Dendritic cell treated with granulocyte-macrophage colony-stimulating factor and Interleukin-4, amounts not matched to agents 40 ng/mL and 50 ng/mL, for 4 days (primary cell): ENCODE measurements at regions of chr2 and their contacts with region 1.

Region 1: GRCh38 chr2:32168513-32168912 is 2.8 kb downstream of the SLC30A6 start:
- H3K4me3 Mint-ChIP-seq: no peak overlapping the region
- H3K27ac Mint-ChIP-seq: no peak overlapping the region
- H3K4me1 Mint-ChIP-seq: peaks cover 28% of the 10 kb centered on the region
- H3K27me3 Mint-ChIP-seq: no peaks in the 10 kb centered on the region

Region 2: GRCh38 chr2:31957354-31958139 is 211.0 kb before region 1 on chr2:
- intact Hi-C with region 1: loop called (anchors 5 kb)
- H3K4me3 Mint-ChIP-seq: peak overlapping the region; percentile 4
- H3K27ac Mint-ChIP-seq: peak overlapping the region; percentile 7
- H3K4me1 Mint-ChIP-seq: peaks cover 52% of the 10 kb centered on the region
- H3K27me3 Mint-ChIP-seq: no peaks in the 10 kb centered on the region